HAP-1 (cell line): ENCODE measurements at regions of chr11 and their contacts with region 1.

Region 1: DNA sequence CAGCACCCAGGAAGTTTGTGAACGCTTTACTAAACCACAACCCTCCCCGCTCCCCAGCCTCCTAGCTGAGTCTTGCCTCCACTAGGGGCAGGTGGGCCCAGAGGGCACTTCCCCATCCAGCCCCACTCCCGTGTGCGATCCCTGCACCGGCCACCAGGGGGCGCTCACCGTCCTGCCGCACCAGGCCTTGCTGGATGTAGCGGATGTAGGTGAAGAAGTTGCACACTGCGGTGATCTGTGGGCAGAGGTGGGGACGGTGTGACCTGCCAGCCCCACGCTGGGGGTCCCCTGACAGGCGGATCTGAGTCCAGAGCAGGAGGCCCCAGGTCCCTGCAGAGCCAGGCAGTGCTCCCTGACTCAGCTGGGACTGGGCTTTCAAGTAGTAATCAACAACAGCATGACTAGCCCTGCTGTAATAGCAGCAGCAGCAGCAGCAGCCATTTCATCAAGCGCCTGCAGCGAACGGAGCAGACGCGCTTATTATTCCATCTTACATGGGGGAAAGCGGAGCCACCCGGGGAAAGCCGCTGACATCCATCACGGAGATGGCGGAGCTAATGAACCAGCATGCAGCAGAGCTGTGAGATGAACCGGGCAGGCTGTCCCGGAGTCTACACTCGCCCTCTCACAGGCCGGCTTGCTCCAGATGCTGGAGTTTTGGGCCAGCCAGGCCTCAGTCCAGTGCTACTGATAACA is 7.9 kb upstream of the FADS3 start:
- DNase-seq: peak; percentile 64 to 93
- H3K4me3 ChIP-seq: no peak overlapping the region
- H3K4me1 ChIP-seq: no peaks in the 10 kb centered on the region
- H3K27me3 ChIP-seq: no peaks in the 10 kb centered on the region

Region 2: GRCh38 chr11:61947486-61948210 is 48.4 kb after region 1 on chr11:
- in situ Hi-C with region 1: loop called (anchors 5 kb)
- DNase-seq: peak; percentile 77 to 88
- H3K4me3 ChIP-seq: no peak overlapping the region
- H3K4me1 ChIP-seq: peaks cover 14% of the 10 kb centered on the region
- H3K27me3 ChIP-seq: peaks cover 6% of the 10 kb centered on the region

Region 3: DNA sequence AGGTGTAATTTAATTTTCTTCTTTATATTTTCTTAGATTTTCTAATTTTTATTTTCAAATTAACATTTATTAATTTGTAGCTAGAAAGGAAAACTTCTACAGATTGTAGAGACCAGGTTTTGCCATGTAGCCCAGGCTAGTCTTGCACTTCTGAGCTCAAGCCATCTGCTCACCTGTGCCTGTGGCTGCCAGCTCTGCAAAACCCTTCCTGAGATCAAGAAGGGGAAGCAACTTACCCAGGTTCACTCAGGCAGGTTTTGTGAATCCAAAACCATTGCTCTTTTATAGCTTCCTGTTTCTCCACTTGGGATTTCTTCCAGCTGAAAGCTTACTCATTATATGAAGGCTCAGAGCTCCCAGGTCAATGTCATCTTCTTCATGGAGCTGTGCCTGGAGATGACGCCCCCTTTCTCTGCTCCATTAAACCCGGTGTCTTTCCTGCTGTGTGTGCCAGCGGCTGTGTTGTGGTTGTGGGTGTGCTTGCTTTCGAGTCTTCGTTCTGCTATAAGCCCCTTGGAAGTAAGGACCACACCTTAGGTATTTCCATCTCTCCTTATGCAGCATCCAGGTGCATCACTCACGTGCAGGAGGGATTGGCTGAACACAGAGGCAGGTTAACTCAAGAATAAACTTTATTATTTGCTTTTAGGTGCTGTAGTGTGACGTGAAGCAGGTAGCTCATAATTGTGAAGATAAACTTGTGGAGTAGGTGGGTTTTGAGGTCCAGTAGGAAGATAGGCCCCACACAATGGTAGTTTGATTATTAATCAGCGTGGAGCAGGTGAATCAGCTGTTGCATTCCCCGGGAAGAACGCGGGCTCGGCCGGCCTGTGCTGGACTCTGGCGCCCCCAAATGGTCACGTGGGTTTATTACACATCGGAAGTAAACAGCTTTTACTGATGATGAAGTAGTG is 182.3 kb after region 1 on chr11:
- in situ Hi-C with region 1: loop called (anchors 5 kb)
- DNase-seq: peak; percentile 33 to 88
- H3K4me3 ChIP-seq: no peak overlapping the region
- H3K4me1 ChIP-seq: no peaks in the 10 kb centered on the region
- H3K27me3 ChIP-seq: no peaks in the 10 kb centered on the region

Region 4: GRCh38 chr11:62108017-62108750 is 208.9 kb after region 1 on chr11:
- in situ Hi-C with region 1: loop called (anchors 5 kb)
- DNase-seq: peak; percentile 50 to 70
- H3K4me3 ChIP-seq: no peak overlapping the region
- H3K4me1 ChIP-seq: no peaks in the 10 kb centered on the region
- H3K27me3 ChIP-seq: no peaks in the 10 kb centered on the region